ENCODE measurements at regions of chr2 and their contacts with region 1.

Region 1: DNA sequence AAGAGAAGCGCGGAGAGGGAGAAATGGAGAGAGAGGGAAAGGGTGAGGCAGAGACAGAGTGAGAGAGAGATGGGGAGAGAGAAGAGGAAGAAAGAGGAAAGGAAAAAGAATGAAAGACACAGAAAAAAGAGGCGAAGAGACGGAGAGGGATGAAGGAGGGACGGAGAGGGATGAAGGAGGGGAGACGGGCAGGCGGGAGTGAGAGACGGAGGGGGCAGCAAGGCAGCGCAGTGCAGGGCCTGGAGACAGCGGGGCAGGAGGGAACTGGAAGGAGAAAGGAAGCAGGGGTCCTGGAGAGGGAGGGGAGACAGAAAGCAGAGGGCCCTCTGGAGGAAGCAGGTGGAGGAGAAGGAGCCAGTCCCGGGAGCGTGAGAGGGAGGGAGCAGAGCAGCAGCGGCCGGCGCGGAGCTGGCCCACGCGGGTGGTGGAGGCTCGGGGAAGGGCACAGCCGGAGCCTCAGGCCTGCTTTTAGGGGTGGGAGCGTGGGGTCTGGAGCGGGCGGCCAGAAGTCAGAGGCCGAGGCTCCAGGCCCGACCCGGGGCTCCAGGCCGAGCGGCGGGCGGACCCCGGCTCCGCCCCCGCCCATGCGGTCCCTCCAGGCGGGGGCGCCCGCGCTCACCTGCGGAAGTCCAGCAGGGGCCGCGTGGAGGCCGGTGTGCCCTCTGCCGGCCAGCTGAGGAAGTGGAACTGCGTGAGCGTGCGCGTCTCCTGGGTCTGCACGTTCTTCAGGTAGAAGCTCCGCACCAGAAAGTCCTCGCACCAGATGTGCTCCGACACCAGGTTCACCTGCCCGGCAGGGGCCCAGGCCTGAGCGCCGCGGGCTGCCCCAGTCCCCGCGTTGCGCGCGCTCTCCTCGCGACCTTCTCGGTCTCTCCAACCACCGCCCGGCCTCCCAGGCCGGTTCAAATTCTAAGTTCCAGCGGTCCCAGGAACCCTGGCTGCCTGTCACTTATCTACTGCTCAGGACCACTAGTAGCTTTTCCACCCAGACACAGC is 14.5 kb downstream of the PTPRN start:
- DNase-seq: peak; percentile 89
- H3K4me3 Mint-ChIP-seq: peak overlapping the region; percentile 77
- H3K27ac Mint-ChIP-seq: no peak overlapping the region
- H3K4me1 Mint-ChIP-seq: peaks cover 20% of the 10 kb centered on the region
- H3K27me3 Mint-ChIP-seq: peaks cover 3% of the 10 kb centered on the region

Region 2: DNA sequence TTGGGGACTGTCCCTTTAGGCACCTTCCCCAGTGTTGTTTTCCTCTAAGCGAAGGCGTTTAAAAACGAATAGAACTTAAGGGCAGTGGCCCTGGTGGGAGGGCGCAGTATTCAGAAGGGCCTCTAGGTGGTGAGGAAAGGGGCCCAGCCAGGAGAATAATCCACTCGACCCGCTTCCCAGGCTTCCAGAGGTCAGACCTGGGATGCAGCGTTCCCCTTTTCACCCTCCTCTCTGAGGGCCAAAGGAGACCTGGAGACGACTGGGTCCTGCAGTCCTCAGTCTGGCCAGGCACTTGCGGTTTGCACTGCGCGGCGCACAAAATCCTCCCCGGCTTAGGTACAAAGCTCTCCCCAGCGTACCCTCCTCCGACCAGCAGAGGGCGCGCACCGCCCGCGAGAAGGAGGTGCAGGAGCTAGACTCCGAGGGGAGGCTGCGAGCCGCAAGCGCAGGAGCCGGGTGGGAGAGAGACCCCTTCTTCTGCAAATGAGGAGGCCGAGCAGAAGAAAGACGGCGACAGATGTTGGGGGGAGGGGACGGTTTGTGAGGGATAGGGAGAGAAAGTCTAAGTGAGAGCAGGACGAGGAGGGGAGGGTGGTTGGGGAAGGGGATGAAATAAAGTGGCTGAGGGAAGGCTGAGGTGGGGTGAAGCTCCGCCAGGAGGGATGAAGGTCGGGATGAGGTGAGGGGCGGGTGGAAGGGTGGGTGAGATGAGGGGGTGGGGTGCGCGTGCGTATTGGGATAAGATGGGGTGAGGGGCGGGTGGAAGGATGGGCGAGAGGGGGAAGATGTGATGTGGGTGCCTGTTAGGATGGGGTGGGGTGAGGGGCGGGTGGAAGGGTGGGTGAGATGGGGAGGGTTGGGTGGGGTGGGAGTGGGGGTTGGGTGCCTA is 314.6 kb before region 1 on chr2:
- CTCF ChIA-PET with region 1: no interaction called
- intact Hi-C with region 1: no loop called
- DNase-seq: peak; percentile 90
- H3K4me3 Mint-ChIP-seq: peak overlapping the region; percentile 56
- H3K27ac Mint-ChIP-seq: no peak overlapping the region
- H3K4me1 Mint-ChIP-seq: peaks cover 27% of the 10 kb centered on the region
- H3K27me3 Mint-ChIP-seq: peaks cover 58% of the 10 kb centered on the region

Region 3: GRCh38 chr2:219155054-219155644 is 139.5 kb before region 1 on chr2:
- CTCF ChIA-PET with region 1: interaction called, 70 read pairs
- intact Hi-C with region 1: loop called (anchors 1 kb)
- DNase-seq: peak; percentile 40
- H3K4me3 Mint-ChIP-seq: no peak overlapping the region
- H3K27ac Mint-ChIP-seq: no peak overlapping the region
- H3K4me1 Mint-ChIP-seq: peaks cover 7% of the 10 kb centered on the region
- H3K27me3 Mint-ChIP-seq: no peaks in the 10 kb centered on the region

Region 4: DNA sequence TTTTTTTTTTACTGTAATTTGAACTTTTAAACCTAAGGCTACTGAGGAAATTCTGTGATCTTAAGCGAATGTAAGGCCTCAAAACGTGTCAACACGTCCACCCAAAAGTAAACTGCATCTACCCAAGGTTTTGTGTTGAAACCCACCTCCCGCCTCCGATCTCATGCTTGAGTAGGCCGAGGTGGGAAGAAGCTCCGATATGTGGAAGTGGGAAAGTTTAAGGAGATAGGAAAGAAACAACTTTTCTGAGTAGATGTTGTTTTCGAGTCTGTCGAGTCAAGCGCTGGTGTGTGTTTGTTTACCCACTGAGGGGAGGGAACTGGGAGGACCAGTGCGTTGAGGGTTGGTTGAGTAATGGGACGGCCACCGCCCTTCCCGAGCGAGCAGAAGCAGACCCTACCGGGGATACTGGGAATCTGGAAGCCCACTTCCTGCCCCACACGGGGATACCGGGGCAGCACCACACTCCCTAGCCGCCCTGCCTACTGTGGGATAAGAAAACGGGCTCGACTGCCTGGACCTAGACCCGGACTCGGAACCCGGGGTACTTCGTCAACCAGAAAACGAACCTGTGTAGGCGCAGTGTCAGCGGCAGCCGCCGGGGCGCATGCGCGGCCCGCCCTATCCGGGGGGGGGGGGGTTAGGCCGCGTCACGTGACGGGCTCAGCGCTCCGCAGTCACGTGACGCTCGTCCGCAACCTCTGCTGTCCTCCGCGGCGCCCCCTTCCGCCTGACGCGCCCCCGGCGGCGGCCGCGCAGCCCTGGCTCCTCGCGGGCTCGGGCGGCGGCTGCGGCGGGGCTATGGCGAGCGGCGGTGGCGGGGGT is 116.9 kb before region 1 on chr2 and contains the start of gene RETREG2:
- CTCF ChIA-PET with region 1: interaction called, 44 read pairs
- intact Hi-C with region 1: loop called (anchors 1 kb)
- DNase-seq: peak; percentile 78
- H3K4me3 Mint-ChIP-seq: peak within 1 kb of the TSS; percentile 94
- H3K27ac Mint-ChIP-seq: peak within 1 kb of the TSS; percentile 98
- H3K4me1 Mint-ChIP-seq: peaks cover 58% of the 10 kb centered on the region
- H3K27me3 Mint-ChIP-seq: no peaks in the 10 kb centered on the region
- total RNA-seq, gene RETREG2: 44.0 to 44.1 TPM

Region 5: DNA sequence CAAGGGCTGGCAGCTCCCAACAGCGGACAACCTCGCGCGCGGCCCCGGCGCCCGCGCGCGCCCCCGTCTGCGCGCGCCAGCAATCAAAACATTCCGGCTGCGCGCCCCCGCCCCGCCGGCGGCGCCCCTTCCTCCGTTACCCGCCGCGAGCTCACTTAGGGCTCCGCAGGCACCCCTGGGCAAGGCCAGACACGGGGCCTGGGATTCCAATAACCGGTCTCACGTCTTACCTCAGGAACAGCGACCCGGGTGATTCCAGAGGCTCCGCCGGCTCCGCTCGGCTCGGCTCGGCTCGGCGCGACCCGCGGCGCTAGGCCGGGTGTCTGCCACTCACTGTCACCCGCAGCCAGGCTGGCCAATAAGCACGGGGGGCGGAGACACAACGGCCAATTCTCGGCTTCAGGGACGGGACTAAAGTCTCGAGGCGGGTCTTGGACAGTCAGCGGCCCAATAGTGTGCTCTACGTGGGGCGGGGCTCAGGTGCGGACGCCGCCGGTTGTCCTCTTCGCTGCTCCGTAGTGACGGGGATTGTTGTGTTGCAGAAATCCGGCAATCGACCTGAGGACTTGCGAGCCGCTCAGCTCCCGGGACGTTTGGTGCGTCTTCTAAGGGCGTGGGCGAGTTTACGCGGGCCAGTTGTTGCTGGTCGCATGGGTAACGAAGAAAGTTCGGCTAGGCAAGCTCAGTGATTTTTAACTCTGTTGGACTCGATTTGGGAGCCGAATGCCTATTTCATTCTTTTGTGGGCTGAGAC is 65.2 kb before region 1 on chr2 and contains the starts of genes ANKZF1 and ATG9A:
- CTCF ChIA-PET with region 1: interaction called, 7 read pairs
- intact Hi-C with region 1: loop called (anchors 1 kb)
- DNase-seq: peak; percentile 99
- H3K4me3 Mint-ChIP-seq: peak within 1 kb of the TSS; percentile 96
- H3K27ac Mint-ChIP-seq: peak within 1 kb of the TSS; percentile 97
- H3K4me1 Mint-ChIP-seq: peaks cover 48% of the 10 kb centered on the region
- H3K27me3 Mint-ChIP-seq: no peaks in the 10 kb centered on the region
- total RNA-seq, gene ANKZF1: 87.7 to 88.5 TPM
- total RNA-seq, gene ATG9A: 26.0 to 27.7 TPM

Region 6: GRCh38 chr2:219261024-219261855 is 33.4 kb before region 1 on chr2:
- CTCF ChIA-PET with region 1: interaction called, 76 read pairs
- intact Hi-C with region 1: no loop called
- DNase-seq: no peak
- H3K4me3 Mint-ChIP-seq: no peak overlapping the region
- H3K27ac Mint-ChIP-seq: no peak overlapping the region
- H3K4me1 Mint-ChIP-seq: no peaks in the 10 kb centered on the region
- H3K27me3 Mint-ChIP-seq: no peaks in the 10 kb centered on the region

Measured in activated naive CD4-positive, alpha-beta T cell treated with anti-CD3 and anti-CD28 coated beads for 36 hours (primary cell).